ENCODE measurements at regions of chr14 and their contacts with region 1.

Region 1: GRCh38 chr14:53596853-53597525 is 359.6 kb downstream of the BMP4 start:
- DNase-seq: no peak
- ATAC-seq: no peak
- H3K4me3 Mint-ChIP-seq: no peak overlapping the region
- H3K27ac Mint-ChIP-seq: no peak overlapping the region
- H3K4me1 Mint-ChIP-seq: no peaks in the 10 kb centered on the region
- H3K27me3 Mint-ChIP-seq: peaks cover 2% of the 10 kb centered on the region
- CTCF ChIP-seq: no peak

Region 2: DNA sequence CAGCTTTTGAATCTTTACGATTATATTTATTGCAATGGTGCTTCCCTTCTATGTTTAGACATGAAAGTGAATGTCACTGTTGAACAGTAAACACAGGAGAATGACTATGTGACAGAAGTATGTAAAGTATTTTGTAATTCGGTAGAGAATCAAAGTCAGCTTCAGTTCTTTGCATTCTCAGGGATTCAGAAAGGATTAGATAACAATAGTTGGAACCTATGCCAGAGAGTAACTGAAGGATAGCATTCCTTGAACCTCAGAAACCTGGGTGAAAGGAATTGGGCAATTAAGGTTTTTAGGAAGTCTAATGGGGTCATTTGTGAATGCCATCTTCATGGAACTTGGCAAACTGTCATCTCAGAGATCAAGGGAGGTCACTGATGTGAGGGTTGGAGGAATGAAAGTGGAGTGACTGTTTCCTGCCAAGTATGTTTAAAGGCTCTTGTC is 138.6 kb before region 1 on chr14:
- CTCF ChIA-PET with region 1: no interaction called
- POLR2A ChIA-PET with region 1: no interaction called
- intact Hi-C with region 1: no loop called
- DNase-seq: no peak
- ATAC-seq: no peak
- H3K4me3 Mint-ChIP-seq: no peak overlapping the region
- H3K27ac Mint-ChIP-seq: no peak overlapping the region
- H3K4me1 Mint-ChIP-seq: no peaks in the 10 kb centered on the region
- H3K27me3 Mint-ChIP-seq: peaks cover 7% of the 10 kb centered on the region
- CTCF ChIP-seq: no peak

Region 3: GRCh38 chr14:53608396-53608795 is 11.4 kb after region 1 on chr14:
- CTCF ChIA-PET with region 1: no interaction called
- POLR2A ChIA-PET with region 1: interaction called, 3 read pairs
- intact Hi-C with region 1: loop called (anchors 2 kb)
- DNase-seq: no peak
- ATAC-seq: peak; percentile 50
- H3K4me3 Mint-ChIP-seq: no peak overlapping the region
- H3K27ac Mint-ChIP-seq: peak overlapping the region; percentile 65
- H3K4me1 Mint-ChIP-seq: peaks cover 55% of the 10 kb centered on the region
- H3K27me3 Mint-ChIP-seq: no peaks in the 10 kb centered on the region
- CTCF ChIP-seq: no peak